Caco-2 (cell line): ENCODE measurements at regions of chr5 and their contacts with region 1.

Region 1: DNA sequence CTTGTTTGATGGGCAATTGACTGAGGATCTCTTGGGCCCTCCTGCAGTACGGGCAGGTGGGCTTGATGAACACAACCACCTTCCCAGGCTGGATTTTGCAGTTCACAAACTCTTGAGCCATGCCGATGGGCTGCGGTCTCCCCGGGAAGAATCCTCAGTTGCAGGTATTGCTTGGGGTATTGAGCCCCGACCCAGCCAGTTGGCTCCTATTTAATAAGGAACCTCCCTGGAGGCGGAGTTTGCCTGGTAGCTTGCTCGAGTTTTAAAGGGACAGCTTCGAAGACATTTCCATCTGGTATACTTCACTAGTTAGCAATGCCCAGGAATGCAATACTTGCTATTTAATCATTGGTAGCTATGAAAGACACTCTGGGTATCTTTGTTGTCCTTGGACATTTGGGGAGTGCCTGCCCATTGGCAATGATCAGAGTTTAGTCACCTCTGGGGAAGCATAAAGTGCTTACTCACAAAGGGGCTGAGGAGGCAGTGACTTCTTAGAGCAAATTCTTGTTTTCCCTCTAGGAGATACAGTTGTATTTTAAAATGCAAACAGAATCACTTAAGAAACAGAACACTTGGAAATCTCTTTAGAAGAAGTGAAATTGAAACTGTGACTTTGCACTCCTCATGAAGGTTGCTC is at the start of gene GLRX:
- DNase-seq: peak; percentile 69 to 70
- H3K4me3 ChIP-seq: peak within 1 kb of the TSS; percentile 59
- H3K4me3 Mint-ChIP-seq: peak within 1 kb of the TSS; percentile 82
- H3K27ac Mint-ChIP-seq: peak within 1 kb of the TSS; percentile 63
- H3K4me1 ChIP-seq: peaks cover 34% of the 10 kb centered on the region
- H3K4me1 Mint-ChIP-seq: peaks cover 21% of the 10 kb centered on the region
- H3K27me3 ChIP-seq: no peaks in the 10 kb centered on the region
- H3K27me3 Mint-ChIP-seq: no peaks in the 10 kb centered on the region
- CTCF ChIP-seq: no peak
- total RNA-seq, gene GLRX: 17.9 and 26.4 TPM in 2 replicates

Region 2: DNA sequence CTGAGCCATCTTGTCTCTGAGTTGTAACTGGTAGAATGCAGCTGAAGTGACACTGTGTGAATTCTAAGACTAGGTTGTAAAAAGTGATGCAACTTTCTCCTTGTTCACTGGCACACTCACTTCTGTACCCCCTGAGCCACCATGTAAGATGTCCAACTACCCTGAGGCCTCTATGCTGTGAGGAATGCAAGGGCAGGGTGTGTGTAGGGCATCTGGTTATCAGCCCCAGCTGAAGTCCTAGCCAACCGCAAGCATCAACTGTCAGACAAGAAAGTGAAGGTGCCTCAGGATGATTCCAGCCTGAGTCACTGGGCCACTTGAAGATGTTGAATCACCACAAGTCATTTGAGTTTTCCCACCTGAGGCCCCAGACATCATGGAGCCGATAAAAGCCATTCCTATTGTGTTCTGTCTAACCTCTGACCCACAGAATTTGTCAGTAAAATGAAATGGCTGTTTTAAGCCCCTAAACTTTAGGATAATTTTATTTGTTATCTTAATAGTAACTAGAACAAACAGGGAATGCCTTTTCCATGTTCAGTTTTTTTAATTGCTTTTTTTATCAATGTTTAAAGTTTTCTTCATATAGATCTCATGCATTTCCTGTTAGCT is 110.2 kb before region 1 on chr5:
- CTCF ChIA-PET with region 1: no interaction called
- POLR2A ChIA-PET with region 1: no interaction called
- intact Hi-C with region 1: no loop called
- DNase-seq: peak; percentile 83 to 95
- H3K4me3 ChIP-seq: no peak overlapping the region
- H3K4me3 Mint-ChIP-seq: peak overlapping the region; percentile 52
- H3K27ac Mint-ChIP-seq: peak overlapping the region; percentile 98
- H3K4me1 ChIP-seq: peaks cover 61% of the 10 kb centered on the region
- H3K4me1 Mint-ChIP-seq: peaks cover 46% of the 10 kb centered on the region
- H3K27me3 ChIP-seq: no peaks in the 10 kb centered on the region
- H3K27me3 Mint-ChIP-seq: no peaks in the 10 kb centered on the region
- CTCF ChIP-seq: no peak

Region 3: GRCh38 chr5:95803284-95804148 is 19.1 kb before region 1 on chr5:
- CTCF ChIA-PET with region 1: no interaction called
- POLR2A ChIA-PET with region 1: interaction called, 3 read pairs
- intact Hi-C with region 1: loop called (anchors 1 kb)
- DNase-seq: peak; percentile 72 to 86
- H3K4me3 ChIP-seq: no peak overlapping the region
- H3K4me3 Mint-ChIP-seq: peak overlapping the region; percentile 18
- H3K27ac Mint-ChIP-seq: peak overlapping the region; percentile 42
- H3K4me1 ChIP-seq: peaks cover 33% of the 10 kb centered on the region
- H3K4me1 Mint-ChIP-seq: peaks cover 20% of the 10 kb centered on the region
- H3K27me3 ChIP-seq: no peaks in the 10 kb centered on the region
- H3K27me3 Mint-ChIP-seq: no peaks in the 10 kb centered on the region
- CTCF ChIP-seq: no peak

Region 4: GRCh38 chr5:95808686-95809413 is 13.8 kb before region 1 on chr5:
- CTCF ChIA-PET with region 1: interaction called, 4 read pairs
- POLR2A ChIA-PET with region 1: interaction called, 5 read pairs
- intact Hi-C with region 1: loop called (anchors 1 kb)
- DNase-seq: no peak
- H3K4me3 ChIP-seq: no peak overlapping the region
- H3K4me3 Mint-ChIP-seq: no peak overlapping the region
- H3K27ac Mint-ChIP-seq: no peak overlapping the region
- H3K4me1 ChIP-seq: peaks cover 47% of the 10 kb centered on the region
- H3K4me1 Mint-ChIP-seq: peaks cover 30% of the 10 kb centered on the region
- H3K27me3 ChIP-seq: no peaks in the 10 kb centered on the region
- H3K27me3 Mint-ChIP-seq: no peaks in the 10 kb centered on the region
- CTCF ChIP-seq: no peak

Region 5: DNA sequence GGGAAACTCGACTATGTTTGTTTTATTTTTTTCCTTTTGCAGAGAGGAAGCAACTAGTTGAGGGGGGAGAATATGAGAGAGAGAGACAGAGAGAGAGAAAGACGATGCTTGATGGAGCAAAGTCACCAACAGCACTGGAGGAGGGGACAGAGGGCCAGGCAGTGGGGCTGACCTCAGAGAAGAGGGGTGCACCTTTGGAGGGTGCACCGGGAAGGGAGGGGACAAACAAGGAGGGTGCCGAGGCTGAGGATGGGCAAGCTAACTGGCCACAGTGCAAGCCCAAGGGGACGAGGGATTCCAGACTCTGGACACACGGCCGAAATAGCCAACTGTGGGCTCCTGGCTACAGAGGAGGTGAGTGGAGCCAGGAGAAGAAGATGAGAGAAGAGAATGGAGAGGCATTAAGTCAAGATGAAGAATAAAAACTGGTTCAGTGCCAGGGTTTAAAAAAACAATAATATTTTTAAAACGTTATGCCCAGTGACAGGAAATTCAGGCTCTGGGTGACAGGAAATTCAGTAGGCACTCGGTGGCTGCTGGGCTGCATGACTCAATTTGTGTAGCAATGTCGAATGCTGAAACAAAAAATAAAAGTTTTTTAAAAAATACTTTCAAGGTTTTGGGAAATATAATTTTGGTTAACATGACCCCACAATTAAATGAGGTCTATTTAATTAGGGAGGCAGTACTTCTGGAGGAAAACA is 13.2 kb after region 1 on chr5:
- CTCF ChIA-PET with region 1: interaction called, 5 read pairs
- POLR2A ChIA-PET with region 1: interaction called, 11 read pairs
- intact Hi-C with region 1: loop called (anchors 1 kb)
- DNase-seq: no peak
- H3K4me3 ChIP-seq: no peak overlapping the region
- H3K4me3 Mint-ChIP-seq: peak overlapping the region; percentile 77
- H3K27ac Mint-ChIP-seq: peak overlapping the region; percentile 87
- H3K4me1 ChIP-seq: no peaks in the 10 kb centered on the region
- H3K4me1 Mint-ChIP-seq: peaks cover 25% of the 10 kb centered on the region
- H3K27me3 ChIP-seq: no peaks in the 10 kb centered on the region
- H3K27me3 Mint-ChIP-seq: no peaks in the 10 kb centered on the region
- CTCF ChIP-seq: no peak

Region 6: DNA sequence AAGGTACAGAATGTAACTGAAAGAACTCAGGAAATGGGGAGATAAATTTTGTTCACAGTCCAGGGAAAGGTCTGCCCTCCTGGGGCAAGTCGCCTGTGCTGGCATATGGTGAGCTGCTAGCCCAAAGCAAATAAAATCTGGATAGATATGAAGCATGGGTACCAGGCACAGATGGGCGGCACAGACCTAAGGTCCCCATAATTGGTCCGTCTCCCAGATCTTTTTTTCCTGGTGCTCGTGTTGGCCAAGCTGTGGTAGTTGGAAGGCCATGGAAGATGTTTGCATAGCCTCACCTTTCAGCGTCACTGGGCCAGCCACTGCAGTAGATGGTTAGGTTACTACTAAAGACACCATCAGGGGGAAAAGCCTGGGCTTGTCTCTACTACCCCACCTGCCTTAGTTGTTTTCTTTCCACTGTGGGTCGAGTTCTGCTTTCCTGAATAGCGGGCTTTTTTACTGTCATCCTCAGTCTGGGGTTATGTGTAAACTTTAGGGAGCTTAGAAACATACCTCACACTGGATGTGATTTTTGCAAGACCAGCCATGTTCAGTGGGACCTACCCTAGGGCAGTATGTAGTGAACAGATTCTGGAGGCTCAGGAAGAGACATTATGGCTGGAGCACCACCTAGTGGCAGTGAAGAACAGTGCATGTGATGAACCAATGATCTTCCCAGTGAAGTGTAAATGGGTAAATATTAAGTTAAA is 24.0 kb after region 1 on chr5:
- CTCF ChIA-PET with region 1: no interaction called
- POLR2A ChIA-PET with region 1: no interaction called
- intact Hi-C with region 1: loop called (anchors 1 kb)
- DNase-seq: peak; percentile 66 to 78
- H3K4me3 ChIP-seq: no peak overlapping the region
- H3K4me3 Mint-ChIP-seq: no peak overlapping the region
- H3K27ac Mint-ChIP-seq: no peak overlapping the region
- H3K4me1 ChIP-seq: no peaks in the 10 kb centered on the region
- H3K4me1 Mint-ChIP-seq: no peaks in the 10 kb centered on the region
- H3K27me3 ChIP-seq: no peaks in the 10 kb centered on the region
- H3K27me3 Mint-ChIP-seq: no peaks in the 10 kb centered on the region
- CTCF ChIP-seq: peak; percentile 91 to 92

Region 7: GRCh38 chr5:97101189-97101910 is 1278.7 kb after region 1 on chr5:
- CTCF ChIA-PET with region 1: no interaction called
- POLR2A ChIA-PET with region 1: no interaction called
- intact Hi-C with region 1: loop called (anchors 10 kb)
- DNase-seq: no peak
- H3K4me3 ChIP-seq: no peak overlapping the region
- H3K4me3 Mint-ChIP-seq: no peak overlapping the region
- H3K27ac Mint-ChIP-seq: no peak overlapping the region
- H3K4me1 ChIP-seq: peaks cover 27% of the 10 kb centered on the region
- H3K4me1 Mint-ChIP-seq: peaks cover 24% of the 10 kb centered on the region
- H3K27me3 ChIP-seq: no peaks in the 10 kb centered on the region
- H3K27me3 Mint-ChIP-seq: no peaks in the 10 kb centered on the region
- CTCF ChIP-seq: no peak